OCI-LY7 (cell line): ENCODE measurements at regions of chr7 and their contacts with region 1.

Region 1: DNA sequence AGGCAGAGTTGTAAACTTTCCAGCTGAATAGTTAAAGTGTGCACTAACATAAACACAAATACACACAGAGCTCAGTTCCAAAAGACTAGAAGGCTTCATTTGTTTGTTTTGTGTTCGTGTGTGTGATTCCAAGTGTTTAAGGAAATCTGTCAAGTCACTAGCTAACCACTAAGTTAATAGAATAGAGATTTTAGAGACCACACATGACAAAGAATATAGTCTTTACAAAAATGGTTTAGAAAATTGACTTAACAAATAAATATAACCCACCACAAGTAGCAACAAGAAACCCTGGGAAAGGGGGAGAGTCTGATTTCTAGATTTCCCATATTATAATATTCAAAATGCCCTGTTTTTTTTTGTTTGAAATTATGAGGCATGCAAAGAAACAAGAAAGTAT is 209.4 kb downstream of the FZD1 start:
- DNase-seq: no peak
- H3K4me3 ChIP-seq: no peak overlapping the region
- H3K27ac ChIP-seq: no peak overlapping the region
- H3K4me1 ChIP-seq: no peaks in the 10 kb centered on the region
- CTCF ChIP-seq: no peak

Region 2: DNA sequence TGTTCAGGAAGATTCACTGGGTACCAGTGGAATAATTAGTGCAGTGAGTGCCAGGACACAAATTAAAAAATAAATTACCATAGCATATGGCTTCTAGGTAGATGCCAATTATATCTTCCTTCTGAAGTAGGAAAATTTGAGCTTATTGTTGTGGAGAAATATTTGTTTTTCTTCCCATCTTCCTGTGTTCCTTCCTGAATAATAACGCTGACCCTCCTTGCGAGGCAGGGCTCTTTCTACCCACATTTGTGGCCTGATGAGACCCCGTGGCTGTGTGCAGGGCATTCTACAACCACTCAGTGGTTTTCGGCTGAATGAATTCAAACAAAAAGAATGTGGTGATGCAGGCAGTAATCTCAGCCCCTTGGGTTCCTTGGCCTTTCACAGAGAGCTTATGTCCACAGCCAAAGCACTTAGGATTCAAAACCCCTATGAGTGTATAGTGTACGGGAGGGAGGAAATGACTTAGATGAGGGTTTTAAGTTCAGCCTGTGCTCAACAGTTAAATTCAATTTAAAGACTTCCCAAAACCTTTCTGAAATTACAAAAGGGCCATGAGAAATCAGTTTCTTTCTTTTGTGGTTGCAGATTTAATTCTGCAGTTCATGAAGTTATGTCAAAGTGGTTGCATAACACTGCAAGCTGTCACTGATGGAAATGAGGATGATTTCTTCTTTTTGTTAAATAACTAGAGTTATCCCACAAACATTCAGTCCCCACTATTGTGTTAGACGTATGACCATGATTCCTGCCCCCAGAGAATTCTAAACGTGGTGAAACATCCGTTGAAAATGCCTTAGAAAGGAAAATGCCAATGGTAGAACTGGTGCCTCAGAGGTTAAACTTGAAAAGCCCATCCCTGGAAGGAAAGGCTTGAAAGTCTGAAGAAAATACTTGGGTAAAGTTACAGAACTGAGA is 45.9 kb after region 1 on chr7:
- CTCF ChIA-PET with region 1: no interaction called
- POLR2A ChIA-PET with region 1: no interaction called
- intact Hi-C with region 1: loop called (anchors 5 kb)
- DNase-seq: no peak
- H3K4me3 ChIP-seq: no peak overlapping the region
- H3K27ac ChIP-seq: no peak overlapping the region
- H3K4me1 ChIP-seq: no peaks in the 10 kb centered on the region
- CTCF ChIP-seq: no peak